Thyroid gland (tissue), 4 donors: ENCODE measurements at regions of chr1 and their contacts with region 1.

Region 1: DNA sequence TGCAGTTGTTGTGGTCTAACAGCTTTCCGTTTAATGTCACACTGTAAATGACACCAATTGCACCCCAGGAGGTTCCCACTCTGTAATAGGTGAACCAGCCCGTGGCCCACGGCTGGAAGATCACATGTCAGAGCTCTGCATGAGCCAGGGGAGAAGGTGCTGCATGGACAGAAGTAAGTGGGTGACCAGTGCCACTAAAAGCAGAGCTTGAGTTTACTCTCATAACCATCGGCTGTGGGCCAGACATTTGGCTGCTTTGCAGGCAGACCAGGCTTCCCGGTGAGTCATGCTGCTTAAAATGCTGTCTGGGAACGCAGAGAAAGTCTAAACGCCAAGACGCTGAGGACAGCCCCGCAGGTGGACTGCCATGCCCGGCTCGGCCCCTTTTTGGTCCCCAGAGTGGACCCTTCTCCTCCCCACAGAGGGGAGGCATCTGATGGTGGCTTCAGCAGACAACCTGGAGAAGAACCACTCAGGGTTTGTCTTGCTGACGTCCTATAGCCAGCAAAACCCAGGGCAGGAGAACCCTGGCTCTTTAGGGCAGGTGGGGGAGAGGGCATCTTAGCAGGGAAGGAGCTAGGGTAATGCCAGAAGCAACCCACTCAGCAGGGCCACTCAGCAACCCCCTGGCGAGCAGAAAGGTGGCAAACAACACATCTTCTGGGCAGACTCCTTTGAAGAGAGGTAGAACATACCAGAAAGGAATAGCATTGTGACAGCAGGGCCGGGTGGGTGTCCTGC is 7.3 kb downstream of the KIAA2013 start:
- DNase-seq: no peak
- H3K4me3 ChIP-seq: no peak overlapping the region
- H3K27ac ChIP-seq: no peak overlapping the region
- H3K4me1 ChIP-seq: peaks cover 0 to 25% of the 10 kb centered on the region in 2 donors
- H3K27me3 ChIP-seq: no peaks in the 10 kb centered on the region
- CTCF ChIP-seq: no peak
- POLR2A ChIP-seq: no peak

Region 2: GRCh38 chr1:11979851-11980675 is 61.1 kb after region 1 on chr1 and contains the start of gene MFN2:
- intact Hi-C with region 1: loop called (anchors 10 kb)
- DNase-seq: peak; percentile 98
- H3K4me3 ChIP-seq: peak within 1 kb of the TSS; percentile 37 to 89 (median 77)
- H3K27ac ChIP-seq: peak within 1 kb of the TSS; percentile 87 to 99 (median 98)
- H3K4me1 ChIP-seq: peaks cover 17 to 24% of the 10 kb centered on the region in 2 donors
- H3K27me3 ChIP-seq: no peaks in the 10 kb centered on the region
- CTCF ChIP-seq: no peak
- POLR2A ChIP-seq: peak in 1 of 2 donors; percentile 77
- total RNA-seq, gene MFN2: 80.0 to 131 (median 111) TPM

Region 3: DNA sequence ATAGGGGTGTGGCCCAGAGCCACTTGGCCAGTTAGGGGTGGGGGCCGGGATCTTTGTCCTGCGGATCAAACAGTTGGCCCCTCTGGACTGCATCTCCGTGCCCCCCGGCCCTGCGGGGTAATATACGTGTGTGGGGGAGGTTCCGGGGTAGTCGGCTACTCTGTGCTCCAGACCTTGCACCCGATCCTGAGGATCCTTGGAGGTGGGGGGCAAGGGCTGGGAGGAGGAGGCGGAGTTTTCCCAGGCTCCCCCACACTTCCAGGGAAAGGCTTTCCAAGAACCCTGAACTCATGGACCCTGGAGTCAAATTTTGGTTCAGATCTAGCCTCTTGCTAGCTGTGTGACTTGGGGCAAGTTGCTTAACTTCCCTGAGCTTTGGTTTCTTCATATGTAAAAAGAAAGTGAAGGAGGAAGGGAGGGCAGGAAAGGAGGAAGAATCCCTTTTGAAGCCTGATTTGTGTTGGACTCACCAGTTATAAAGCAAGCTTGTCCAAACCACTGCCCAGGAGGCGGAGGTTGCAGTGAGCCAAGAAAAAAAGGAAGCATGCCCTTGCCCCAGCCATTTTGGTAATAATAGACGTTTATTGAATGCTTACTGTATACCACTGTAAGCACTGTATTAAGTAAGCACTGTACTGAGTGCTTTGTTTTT is 101.0 kb after region 1 on chr1:
- intact Hi-C with region 1: loop called (anchors 10 kb)
- DNase-seq: no peak
- H3K4me3 ChIP-seq: peak overlapping the region; percentile 42 to 84 (median 60)
- H3K27ac ChIP-seq: peak overlapping the region in 2 of 3 donors; percentile 76 to 81
- H3K4me1 ChIP-seq: peaks cover 0 to 15% of the 10 kb centered on the region in 2 donors
- H3K27me3 ChIP-seq: no peaks in the 10 kb centered on the region
- CTCF ChIP-seq: no peak
- POLR2A ChIP-seq: no peak